GM12878 (cell line): ENCODE measurements at regions of chr4 and their contacts with region 1.

Region 1: GRCh38 chr4:169024762-169025161 is 14.7 kb upstream of the CBR4 start:
- DNase-seq: no peak
- ATAC-seq: peak; percentile 97
- H3K4me3 ChIP-seq: no peak overlapping the region
- H3K27ac ChIP-seq: no peak overlapping the region
- H3K4me1 ChIP-seq: no peaks in the 10 kb centered on the region
- H3K27me3 ChIP-seq: no peaks in the 10 kb centered on the region
- CTCF ChIP-seq: peak; percentile 63 to 77 (median 65)
- EP300 ChIP-seq: no peak
- POLR2A ChIP-seq: no peak
- RAD21 ChIP-seq: peak; percentile 94

Region 2: GRCh38 chr4:169010125-169011023 is 14.4 kb before region 1 on chr4 and contains the start of gene CBR4:
- CTCF ChIA-PET with region 1: interaction called, 10 read pairs
- POLR2A ChIA-PET with region 1: no interaction called
- RAD21 ChIA-PET with region 1: interaction called, 4 read pairs
- SMC1A ChIA-PET with region 1: interaction called, 16 read pairs
- in situ Hi-C with region 1: no loop called
- intact Hi-C with region 1: no loop called
- DNase-seq: peak; percentile 94
- ATAC-seq: peak; percentile 96
- H3K4me3 ChIP-seq: peak within 1 kb of the TSS; percentile 86
- H3K27ac ChIP-seq: peak within 1 kb of the TSS; percentile 91
- H3K4me1 ChIP-seq: no peaks in the 10 kb centered on the region
- H3K27me3 ChIP-seq: no peaks in the 10 kb centered on the region
- CTCF ChIP-seq: peak; percentile 6 to 36 (median 35); a peak in 2 of 6 replicates
- EP300 ChIP-seq: no peak; a peak in 1 of 4 replicates
- POLR2A ChIP-seq: peak; percentile 86
- RAD21 ChIP-seq: 0 out of 2 replicates have a peak, but pooled peaks have one; percentile 11
- polyA plus RNA-seq, gene CBR4: 21.4 to 36.2 TPM

Region 3: GRCh38 chr4:169311643-169312365 is 287.0 kb after region 1 on chr4:
- CTCF ChIA-PET with region 1: interaction called, 5 read pairs
- POLR2A ChIA-PET with region 1: no interaction called
- RAD21 ChIA-PET with region 1: no interaction called
- SMC1A ChIA-PET with region 1: no interaction called
- in situ Hi-C with region 1: no loop called
- intact Hi-C with region 1: loop called (anchors 2 kb)
- DNase-seq: peak; percentile 30
- ATAC-seq: peak; percentile 96
- H3K4me3 ChIP-seq: no peak overlapping the region
- H3K27ac ChIP-seq: no peak overlapping the region
- H3K4me1 ChIP-seq: no peaks in the 10 kb centered on the region
- H3K27me3 ChIP-seq: no peaks in the 10 kb centered on the region
- CTCF ChIP-seq: peak; percentile 42 to 45 (median 44)
- EP300 ChIP-seq: no peak
- POLR2A ChIP-seq: no peak
- RAD21 ChIP-seq: peak; percentile 71

Region 4: GRCh38 chr4:169420291-169420690 is 395.5 kb after region 1 on chr4:
- CTCF ChIA-PET with region 1: no interaction called
- POLR2A ChIA-PET with region 1: no interaction called
- RAD21 ChIA-PET with region 1: no interaction called
- SMC1A ChIA-PET with region 1: no interaction called
- in situ Hi-C with region 1: no loop called
- intact Hi-C with region 1: no loop called
- DNase-seq: no peak
- ATAC-seq: no peak
- H3K4me3 ChIP-seq: no peak overlapping the region
- H3K27ac ChIP-seq: no peak overlapping the region
- H3K4me1 ChIP-seq: no peaks in the 10 kb centered on the region
- H3K27me3 ChIP-seq: no peaks in the 10 kb centered on the region
- CTCF ChIP-seq: no peak
- EP300 ChIP-seq: no peak
- POLR2A ChIP-seq: no peak
- RAD21 ChIP-seq: no peak

Region 5: GRCh38 chr4:169566021-169566818 is 541.5 kb after region 1 on chr4:
- CTCF ChIA-PET with region 1: interaction called, 10 read pairs
- POLR2A ChIA-PET with region 1: no interaction called
- RAD21 ChIA-PET with region 1: interaction called, 7 read pairs
- SMC1A ChIA-PET with region 1: interaction called, 12 read pairs
- in situ Hi-C with region 1: no loop called
- intact Hi-C with region 1: loop called (anchors 5 kb)
- DNase-seq: no peak
- ATAC-seq: peak; percentile 92
- H3K4me3 ChIP-seq: no peak overlapping the region
- H3K27ac ChIP-seq: no peak overlapping the region
- H3K4me1 ChIP-seq: no peaks in the 10 kb centered on the region
- H3K27me3 ChIP-seq: no peaks in the 10 kb centered on the region
- CTCF ChIP-seq: peak; percentile 47 to 69 (median 61); a peak in 5 of 6 replicates
- EP300 ChIP-seq: no peak
- POLR2A ChIP-seq: no peak
- RAD21 ChIP-seq: peak; percentile 73